ENCODE measurements at regions of chr5 and their contacts with region 1.

Region 1: GRCh38 chr5:132883261-132883834 is 9.9 kb downstream of the LEAP2 start:
- ATAC-seq: peak; percentile 40 to 93 (median 72)
- H3K4me3 ChIP-seq: no peak overlapping the region
- H3K27ac ChIP-seq: no peak overlapping the region
- H3K4me1 ChIP-seq: no peaks in the 10 kb centered on the region

Region 2: DNA sequence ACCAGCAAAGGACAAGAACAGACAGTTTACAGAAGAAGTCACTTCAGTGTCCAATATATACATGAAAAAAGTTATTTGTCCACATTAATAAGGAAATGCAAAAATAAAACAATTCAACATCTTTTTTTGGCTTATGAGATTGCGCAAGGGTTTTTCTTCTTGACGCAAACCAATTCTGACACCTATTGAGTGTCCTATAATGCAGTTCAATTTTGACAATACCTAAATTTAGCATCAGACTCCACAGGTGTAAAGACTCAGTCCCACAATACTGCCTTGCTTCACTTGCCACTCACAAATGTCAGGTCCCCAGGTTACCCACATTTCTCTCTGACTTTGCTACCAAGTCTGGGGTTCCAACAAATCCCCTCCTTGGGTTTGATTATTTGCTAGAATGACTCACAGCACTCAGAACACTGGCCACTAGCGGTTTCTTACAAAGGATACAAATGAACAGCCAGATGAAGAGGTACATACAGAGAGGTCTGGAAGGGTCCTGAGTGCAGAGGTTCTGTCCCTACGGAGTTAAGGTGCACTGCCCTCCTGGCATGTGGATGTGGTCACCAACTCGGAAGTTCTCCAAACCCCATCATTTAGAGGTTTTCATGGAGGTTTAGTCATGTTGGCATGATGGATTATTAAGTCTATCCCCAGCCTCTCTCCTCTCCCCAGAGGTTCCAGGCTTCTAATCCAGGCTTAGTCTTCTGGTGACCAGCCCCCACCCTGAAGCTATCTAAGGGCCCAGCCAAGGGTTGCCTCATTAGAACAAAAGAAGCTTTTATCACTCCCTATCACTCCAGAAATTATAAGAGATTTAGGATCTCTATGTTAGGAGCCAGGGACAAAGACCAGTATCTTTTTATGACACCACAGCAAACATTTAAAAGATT is 540.8 kb before region 1 on chr5:
- in situ Hi-C with region 1: no loop called
- ATAC-seq: no peak
- H3K4me3 ChIP-seq: no peak overlapping the region
- H3K27ac ChIP-seq: no peak overlapping the region
- H3K4me1 ChIP-seq: no peaks in the 10 kb centered on the region

Region 3: DNA sequence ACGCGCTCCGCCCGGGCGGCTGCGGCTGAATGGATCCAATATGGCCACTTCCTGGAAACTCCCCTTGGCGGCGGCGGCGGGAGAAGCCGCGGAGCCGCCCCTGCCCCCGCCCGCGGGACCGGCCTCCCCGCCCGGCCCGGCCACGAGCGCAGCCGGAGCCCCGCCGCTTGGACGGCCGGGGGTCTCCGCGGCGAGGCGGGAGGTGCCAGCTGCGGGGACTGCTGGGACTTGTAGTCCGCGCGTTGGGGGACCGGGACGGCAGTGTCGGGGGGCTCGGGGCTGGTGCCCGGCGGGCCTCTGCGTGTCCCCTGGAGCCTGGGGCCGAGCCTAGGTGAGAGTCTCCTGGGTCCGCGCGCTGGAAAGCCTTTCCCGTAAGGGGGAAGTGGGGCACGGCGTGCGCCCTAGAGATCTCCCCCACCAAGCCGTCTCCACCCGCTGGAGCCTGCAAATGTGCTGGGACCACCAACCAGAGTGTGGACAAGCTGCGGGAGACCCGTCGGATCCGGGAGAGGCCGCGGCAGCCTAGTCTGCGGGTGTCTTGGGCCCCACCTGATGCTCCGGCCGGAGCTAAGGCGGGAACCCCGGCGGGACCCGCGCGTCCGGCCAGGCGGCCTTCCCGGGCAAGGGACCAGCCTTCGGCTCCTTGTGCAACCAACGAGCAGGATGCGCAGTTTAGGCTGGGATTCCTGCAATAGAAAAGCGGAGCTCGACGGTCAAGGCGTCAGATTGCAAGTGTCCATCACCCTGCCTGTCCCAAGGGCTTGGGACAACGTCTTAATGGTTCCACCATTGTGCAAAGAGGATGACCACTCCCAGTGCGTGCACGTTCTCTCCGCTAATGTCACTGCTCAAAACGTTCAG is 105.9 kb before region 1 on chr5 and contains the start of gene SEPTIN8:
- in situ Hi-C with region 1: loop called in 1 of 9 experiments (anchors 25 kb)
- ATAC-seq: peak; percentile 13 to 91 (median 84)
- H3K4me3 ChIP-seq: peak within 1 kb of the TSS; percentile 46 to 96 (median 79)
- H3K27ac ChIP-seq: no peak within 1 kb of the TSS
- H3K4me1 ChIP-seq: peaks cover 6 to 8% of the 10 kb centered on the region in 2 donors
- total RNA-seq, gene SEPTIN8: 22.9 to 59.2 (median 33.4) TPM

Measured in motor neuron (in vitro differentiated cells).